ENCODE measurements at regions of chr2 and their contacts with region 1.

Region 1: GRCh38 chr2:215654148-215654819 is 218.4 kb upstream of the FN1 start:
- DNase-seq: no peak
- ATAC-seq: no peak
- H3K4me3 ChIP-seq: no peak overlapping the region
- H3K27ac ChIP-seq: no peak overlapping the region
- H3K4me1 ChIP-seq: no peaks in the 10 kb centered on the region
- H3K27me3 ChIP-seq: no peaks in the 10 kb centered on the region
- CTCF ChIP-seq: no peak
- POLR2A ChIP-seq: no peak
- RAD21 ChIP-seq: no peak

Region 2: GRCh38 chr2:214809751-214810564 is 844.3 kb before region 1 on chr2:
- CTCF ChIA-PET with region 1: no interaction called
- POLR2A ChIA-PET with region 1: no interaction called
- RAD21 ChIA-PET with region 1: no interaction called
- intact Hi-C with region 1: no loop called
- DNase-seq: peak; percentile 95
- ATAC-seq: peak; percentile 96
- H3K4me3 ChIP-seq: peak overlapping the region; percentile 82 to 94
- H3K27ac ChIP-seq: no peak overlapping the region
- H3K4me1 ChIP-seq: peaks cover 3 to 20% of the 10 kb centered on the region in 2 experiments; a peak in 3 of 4 replicates
- H3K27me3 ChIP-seq: no peaks in the 10 kb centered on the region
- CTCF ChIP-seq: no peak
- POLR2A ChIP-seq: no peak
- RAD21 ChIP-seq: no peak

Region 3: DNA sequence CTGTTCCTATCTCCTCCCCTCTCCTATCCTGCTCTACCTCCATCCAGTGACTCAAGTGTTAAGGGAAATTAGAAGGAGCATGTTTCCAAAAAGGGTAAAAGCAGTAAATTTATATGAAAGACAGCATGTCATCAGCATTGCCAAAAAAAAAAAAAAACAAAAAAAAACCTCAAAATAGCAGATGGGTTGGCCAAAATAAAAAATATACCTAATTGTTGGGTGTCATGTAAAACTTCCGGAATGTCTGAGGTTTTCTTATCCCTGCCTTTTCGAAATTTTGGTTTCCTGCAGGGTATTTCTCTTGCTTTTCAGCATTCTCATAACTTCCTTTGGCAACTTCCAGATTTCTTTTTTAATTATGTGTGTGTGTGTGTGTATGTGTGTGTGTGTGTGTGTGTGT is 23.2 kb after region 1 on chr2:
- CTCF ChIA-PET with region 1: no interaction called
- POLR2A ChIA-PET with region 1: no interaction called
- RAD21 ChIA-PET with region 1: no interaction called
- intact Hi-C with region 1: loop called (anchors 1 kb)
- DNase-seq: no peak
- ATAC-seq: no peak
- H3K4me3 ChIP-seq: no peak overlapping the region
- H3K27ac ChIP-seq: no peak overlapping the region
- H3K4me1 ChIP-seq: no peaks in the 10 kb centered on the region
- H3K27me3 ChIP-seq: no peaks in the 10 kb centered on the region
- CTCF ChIP-seq: no peak
- POLR2A ChIP-seq: no peak
- RAD21 ChIP-seq: no peak

Measured in HCT116 (cell line).